ENCODE measurements at regions of chr21 and their contacts with region 1.

Region 1: DNA sequence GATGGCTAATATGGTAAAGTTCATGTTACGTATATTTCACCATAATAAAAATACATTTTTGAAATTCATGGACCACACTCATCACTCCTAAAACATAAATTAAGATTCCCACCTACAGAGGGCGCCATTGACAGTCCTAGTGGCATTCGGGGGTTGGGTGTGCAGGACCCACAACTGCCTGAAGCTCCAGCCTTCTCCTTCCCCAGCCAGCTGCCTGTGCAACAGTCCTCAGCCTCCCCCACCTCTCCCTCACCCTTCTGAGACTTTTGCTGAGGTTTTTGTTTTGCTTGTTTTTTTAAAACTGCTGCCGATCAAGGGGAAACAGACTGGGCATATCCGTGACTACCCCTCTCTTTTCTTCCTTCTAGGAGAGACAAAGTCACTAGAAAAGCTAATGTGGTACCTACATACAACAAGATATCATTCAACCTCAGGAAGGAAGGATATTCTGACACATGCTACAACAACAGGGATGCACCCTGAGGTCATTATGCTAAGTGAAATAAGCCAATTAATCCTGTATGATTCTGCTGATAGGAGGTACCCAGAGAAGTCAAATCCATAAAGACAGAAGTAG is 9.2 kb upstream of the EVA1C start:
- DNase-seq: no peak
- H3K4me3 ChIP-seq: no peak overlapping the region
- H3K27ac ChIP-seq: no peak overlapping the region
- H3K4me1 ChIP-seq: peaks cover 5 to 24% (median 10%) of the 10 kb centered on the region in 3 donors
- H3K27me3 ChIP-seq: peaks cover 0 to 6% (median 0%) of the 10 kb centered on the region in 4 donors
- CTCF ChIP-seq: peak; percentile 22 to 73 (median 61)
- POLR2A ChIP-seq: no peak

Region 2: GRCh38 chr21:31366825-31367224 is 1036.5 kb before region 1 on chr21:
- intact Hi-C with region 1: no loop called
- DNase-seq: no peak
- H3K4me3 ChIP-seq: no peak overlapping the region
- H3K27ac ChIP-seq: peak overlapping the region; percentile 65 to 77 (median 68)
- H3K4me1 ChIP-seq: peaks cover 0 to 20% (median 0%) of the 10 kb centered on the region in 3 donors
- H3K27me3 ChIP-seq: no peaks in the 10 kb centered on the region
- CTCF ChIP-seq: no peak
- POLR2A ChIP-seq: no peak

Region 3: DNA sequence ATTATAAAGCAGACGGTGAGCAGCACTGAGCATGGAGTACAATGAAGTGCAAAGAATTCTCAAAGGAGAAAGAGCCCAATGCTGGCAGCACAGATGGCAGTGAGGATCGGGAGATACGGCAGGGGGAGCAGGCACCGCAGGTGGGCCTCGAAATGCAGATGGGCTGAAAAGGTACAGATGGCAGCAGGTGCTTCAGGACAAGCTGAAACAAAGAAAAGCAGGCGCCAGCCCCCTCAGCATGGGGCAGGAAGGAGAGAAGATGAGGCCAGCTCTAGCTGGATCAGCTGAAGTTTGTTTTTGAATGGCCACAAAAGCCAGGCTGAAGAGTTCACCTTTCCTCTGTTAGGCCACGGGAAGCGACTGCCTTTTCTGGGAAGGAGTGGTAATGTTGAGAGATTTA is 201.2 kb after region 1 on chr21:
- intact Hi-C with region 1: loop called (anchors 10 kb)
- DNase-seq: no peak
- H3K4me3 ChIP-seq: no peak overlapping the region
- H3K27ac ChIP-seq: no peak overlapping the region
- H3K4me1 ChIP-seq: no peaks in the 10 kb centered on the region
- H3K27me3 ChIP-seq: no peaks in the 10 kb centered on the region
- CTCF ChIP-seq: no peak
- POLR2A ChIP-seq: no peak